ENCODE measurements at regions of chr14 and their contacts with region 1.

Region 1: GRCh38 chr14:64986578-64987571 is at the start of gene FNTB:
- H3K4me3 Mint-ChIP-seq: peak within 1 kb of the TSS; percentile 99
- H3K27ac Mint-ChIP-seq: peak within 1 kb of the TSS; percentile 96
- H3K4me1 Mint-ChIP-seq: peaks cover 31% of the 10 kb centered on the region
- H3K27me3 Mint-ChIP-seq: peaks cover 14% of the 10 kb centered on the region

Region 2: GRCh38 chr14:64272019-64272418 is 714.9 kb before region 1 on chr14:
- intact Hi-C with region 1: no loop called
- H3K4me3 Mint-ChIP-seq: no peak overlapping the region
- H3K27ac Mint-ChIP-seq: no peak overlapping the region
- H3K4me1 Mint-ChIP-seq: no peaks in the 10 kb centered on the region
- H3K27me3 Mint-ChIP-seq: no peaks in the 10 kb centered on the region

Region 3: GRCh38 chr14:64823305-64823861 is 163.5 kb before region 1 on chr14:
- intact Hi-C with region 1: loop called (anchors 1 kb)
- H3K4me3 Mint-ChIP-seq: no peak overlapping the region
- H3K27ac Mint-ChIP-seq: no peak overlapping the region
- H3K4me1 Mint-ChIP-seq: peaks cover 21% of the 10 kb centered on the region
- H3K27me3 Mint-ChIP-seq: peaks cover 22% of the 10 kb centered on the region

Region 4: GRCh38 chr14:64914237-64914971 is 72.5 kb before region 1 on chr14 and contains the start of gene CHURC1:
- intact Hi-C with region 1: loop called (anchors 2 kb)
- H3K4me3 Mint-ChIP-seq: peak within 1 kb of the TSS; percentile 88
- H3K27ac Mint-ChIP-seq: peak within 1 kb of the TSS; percentile 97
- H3K4me1 Mint-ChIP-seq: peaks cover 39% of the 10 kb centered on the region
- H3K27me3 Mint-ChIP-seq: peaks cover 2% of the 10 kb centered on the region

Region 5: GRCh38 chr14:65019944-65020566 is 33.2 kb after region 1 on chr14:
- intact Hi-C with region 1: loop called (anchors 2 kb)
- H3K4me3 Mint-ChIP-seq: no peak overlapping the region
- H3K27ac Mint-ChIP-seq: no peak overlapping the region
- H3K4me1 Mint-ChIP-seq: peaks cover 9% of the 10 kb centered on the region
- H3K27me3 Mint-ChIP-seq: no peaks in the 10 kb centered on the region

Region 6: DNA sequence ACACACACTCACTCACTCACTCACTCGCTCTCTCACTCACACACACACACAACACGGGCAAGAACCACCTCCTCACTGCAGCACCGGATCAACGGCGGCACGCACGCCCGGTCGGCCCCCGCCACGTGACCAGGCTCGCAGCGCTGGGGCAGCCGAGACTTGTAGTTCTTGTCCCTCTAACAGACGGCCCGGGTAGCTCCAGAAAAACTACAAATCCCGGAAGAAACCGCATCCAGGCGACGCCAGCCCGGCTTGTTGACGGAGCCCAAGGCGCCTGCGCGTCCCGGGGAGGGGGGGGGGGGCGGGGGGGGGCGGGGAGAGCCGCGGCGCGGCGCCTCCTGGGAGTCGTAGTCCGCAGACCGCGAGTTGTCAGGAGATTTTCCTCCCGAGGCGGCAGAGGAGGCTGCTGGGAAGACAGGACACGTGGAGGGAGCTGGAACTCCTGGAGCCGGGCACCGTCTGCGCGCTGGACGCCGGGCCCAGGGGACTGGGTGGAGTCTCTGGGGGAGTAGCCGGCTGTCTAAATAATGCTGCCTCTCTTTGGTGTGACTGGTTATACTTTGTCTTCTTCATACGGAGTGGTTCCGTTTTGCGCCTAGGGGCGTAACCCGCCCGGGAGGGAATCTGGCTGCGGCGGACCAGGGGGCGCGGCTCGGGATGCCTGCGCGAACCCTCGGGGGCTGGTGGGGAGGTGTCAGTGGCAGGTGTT is 115.7 kb after region 1 on chr14 and contains the start of gene MAX:
- intact Hi-C with region 1: loop called (anchors 1 kb)
- H3K4me3 Mint-ChIP-seq: peak within 1 kb of the TSS; percentile 80
- H3K27ac Mint-ChIP-seq: peak within 1 kb of the TSS; percentile 81
- H3K4me1 Mint-ChIP-seq: peaks cover 18% of the 10 kb centered on the region
- H3K27me3 Mint-ChIP-seq: no peaks in the 10 kb centered on the region

Region 7: DNA sequence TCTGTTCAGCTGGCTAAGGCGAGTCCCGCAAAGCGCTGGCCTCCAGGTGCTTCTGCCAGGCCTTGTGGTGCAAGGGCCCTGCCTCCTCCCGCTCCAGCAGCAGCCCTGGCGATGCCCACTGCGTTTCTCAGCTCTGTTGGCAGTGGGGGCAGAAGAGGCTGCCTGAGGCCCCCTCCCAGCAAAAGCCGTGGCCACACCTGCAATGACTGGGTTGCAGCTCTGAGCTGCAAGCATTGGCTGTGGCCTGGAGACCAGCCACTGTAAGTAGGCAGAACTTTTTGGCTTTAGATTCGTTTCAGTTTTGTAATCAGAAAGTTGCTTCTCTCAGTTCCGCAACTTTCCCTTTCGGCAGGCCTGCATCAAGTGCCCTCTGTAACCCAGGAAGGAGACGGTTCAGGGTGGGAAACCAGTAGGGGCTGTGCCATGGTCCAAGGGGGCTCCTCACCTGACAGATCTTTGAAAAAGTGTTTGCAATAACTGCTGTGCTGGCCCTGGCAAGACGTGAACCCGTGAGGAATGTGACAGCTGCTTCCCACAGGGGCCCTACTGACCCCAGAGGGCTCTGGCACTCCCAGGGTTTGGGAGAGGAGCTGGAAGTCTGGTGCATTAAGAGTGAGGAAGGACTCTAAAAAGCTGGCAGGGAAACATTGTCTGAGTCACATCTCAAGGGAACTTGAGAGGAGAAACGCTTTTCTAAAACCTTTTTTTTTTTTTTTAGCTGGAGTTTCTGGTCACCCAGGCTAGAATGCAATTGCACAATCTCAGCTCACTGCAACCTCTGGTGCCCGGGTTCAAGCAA is 169.9 kb after region 1 on chr14:
- intact Hi-C with region 1: loop called (anchors 5 kb)
- H3K4me3 Mint-ChIP-seq: peak overlapping the region; percentile 60
- H3K27ac Mint-ChIP-seq: peak overlapping the region; percentile 78
- H3K4me1 Mint-ChIP-seq: peaks cover 26% of the 10 kb centered on the region
- H3K27me3 Mint-ChIP-seq: peaks cover 29% of the 10 kb centered on the region